Activated T-helper 2 cell treated with anti-CD3 and anti-CD28 coated beads, Interferon-gamma antibody, Interleukin-2, Interleukin-4, amounts not matched to agents 10 μg/mL and 5 μg/mL and 100 μg/mL, durations not matched to agents 14 hours and 24 hours and 36 hours (primary cell): ENCODE measurements at regions of chr13 and their contacts with region 1.

Region 1: DNA sequence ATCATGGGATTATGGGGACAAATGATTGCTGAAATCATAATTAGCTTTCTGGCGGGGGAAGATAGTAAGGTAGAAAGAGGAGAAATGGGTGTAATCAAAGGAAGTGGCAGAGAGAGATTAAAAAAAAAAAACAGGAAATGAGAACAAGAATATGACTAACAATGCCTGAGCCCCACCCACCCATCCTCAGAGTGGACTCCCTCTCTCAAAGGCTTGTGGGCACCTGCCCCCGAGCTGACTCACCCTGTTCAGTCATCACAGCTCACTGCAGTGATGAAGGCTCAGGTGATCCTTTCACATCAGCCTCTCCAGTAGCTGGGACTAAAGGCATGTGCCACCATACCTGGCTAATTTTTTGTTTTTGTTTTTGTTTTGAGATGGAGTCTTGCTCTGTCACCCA is 26.4 kb upstream of the TPT1 start:
- DNase-seq: peak; percentile 87
- H3K4me3 Mint-ChIP-seq: peak overlapping the region; percentile 41
- H3K27ac Mint-ChIP-seq: peak overlapping the region; percentile 87
- H3K4me1 Mint-ChIP-seq: peaks cover 40% of the 10 kb centered on the region
- H3K27me3 Mint-ChIP-seq: no peaks in the 10 kb centered on the region

Region 2: DNA sequence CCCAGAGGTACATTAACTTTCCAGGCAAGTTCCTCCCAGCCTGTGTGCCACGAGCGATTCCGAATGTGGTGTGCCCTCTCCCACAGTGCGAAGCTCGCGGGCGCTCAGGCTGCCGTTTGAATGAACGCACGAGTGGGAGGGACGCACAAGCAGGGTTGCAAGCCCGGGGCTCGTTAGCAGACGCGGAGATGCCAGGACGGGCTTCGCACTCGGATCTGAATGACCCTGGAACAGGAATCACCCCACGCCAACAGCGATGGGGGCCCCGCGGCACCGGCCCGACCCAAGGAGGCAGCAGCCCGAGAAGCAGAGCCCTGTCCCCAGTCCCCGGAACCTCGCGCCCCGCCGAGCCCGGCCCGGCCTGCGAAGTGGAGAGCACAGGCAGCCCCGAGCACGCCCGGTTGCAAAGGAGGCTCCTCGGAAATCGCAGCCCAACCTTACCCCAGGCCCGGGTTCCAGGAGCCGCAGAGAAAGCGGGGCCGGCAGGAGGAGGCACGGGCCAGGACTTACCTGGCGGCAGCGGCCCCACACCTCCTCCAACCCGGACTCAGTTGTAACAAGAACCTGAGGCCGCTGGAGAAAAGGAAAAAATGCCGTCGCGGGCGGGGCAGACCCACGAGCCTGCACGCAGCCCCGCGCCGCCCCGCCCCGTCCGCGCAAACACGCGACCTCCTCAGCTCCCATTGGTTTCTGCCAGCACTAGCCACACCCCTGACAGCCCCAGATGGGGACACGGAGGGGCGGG is 50.6 kb after region 1 on chr13 and contains the start of gene SLC25A30:
- intact Hi-C with region 1: loop called (anchors 1 kb)
- DNase-seq: peak; percentile 82
- H3K4me3 Mint-ChIP-seq: peak within 1 kb of the TSS; percentile 88
- H3K27ac Mint-ChIP-seq: peak within 1 kb of the TSS; percentile 87
- H3K4me1 Mint-ChIP-seq: peaks cover 12% of the 10 kb centered on the region
- H3K27me3 Mint-ChIP-seq: no peaks in the 10 kb centered on the region
- total RNA-seq, gene SLC25A30: 12.2 and 13.6 TPM in 2 replicates

Region 3: GRCh38 chr13:45464687-45465453 is 97.5 kb after region 1 on chr13 and contains the start of gene COG3:
- intact Hi-C with region 1: loop called (anchors 1 kb)
- DNase-seq: peak; percentile 94
- H3K4me3 Mint-ChIP-seq: peak within 1 kb of the TSS; percentile 91
- H3K27ac Mint-ChIP-seq: peak within 1 kb of the TSS; percentile 83
- H3K4me1 Mint-ChIP-seq: peaks cover 28% of the 10 kb centered on the region
- H3K27me3 Mint-ChIP-seq: peaks cover 3% of the 10 kb centered on the region
- total RNA-seq, gene COG3: 21.3 and 22.5 TPM in 2 replicates